ENCODE measurements at regions of chr5 and their contacts with region 1.

Region 1: DNA sequence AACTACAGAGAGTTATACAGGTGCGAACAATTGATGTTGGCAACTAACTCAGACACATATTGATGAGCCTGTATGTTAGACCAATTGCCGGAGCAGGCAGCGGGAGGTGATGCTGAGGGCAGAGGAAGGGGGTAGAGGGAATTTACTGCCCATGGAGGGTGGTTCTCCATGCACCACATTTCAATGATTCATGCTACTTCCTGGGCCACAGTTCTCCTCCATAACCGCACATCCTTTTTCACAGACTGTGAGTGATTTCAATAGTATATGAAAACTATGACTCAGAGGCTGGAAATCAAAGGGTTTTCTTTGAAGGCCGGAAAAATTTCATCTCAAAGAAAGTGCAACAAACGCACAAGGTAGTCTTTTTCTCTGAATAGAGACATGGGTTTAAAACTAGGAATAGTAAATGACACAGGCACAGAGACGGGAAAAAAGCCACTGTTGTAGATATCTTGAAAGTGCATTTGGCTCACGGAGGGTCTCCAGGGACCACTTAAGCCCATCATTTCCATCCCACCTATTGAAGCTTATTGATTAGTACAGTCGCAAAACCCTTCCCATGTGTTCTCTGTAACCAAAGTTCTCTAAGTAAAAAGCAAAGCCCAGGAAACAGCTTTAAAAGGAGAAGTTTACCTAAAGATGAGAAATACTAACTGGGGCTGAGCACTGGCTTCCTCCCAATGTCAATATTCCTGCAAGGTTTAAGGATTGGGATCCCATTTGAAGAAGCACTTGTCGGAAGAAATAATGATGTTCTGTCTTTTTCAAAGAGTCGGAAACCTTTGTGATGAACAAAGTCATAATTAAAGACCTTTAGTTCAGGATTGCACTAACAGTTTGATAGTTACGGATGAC is 28.0 kb upstream of the ADAM19 start:
- DNase-seq: peak; percentile 92
- H3K4me3 Mint-ChIP-seq: peak overlapping the region; percentile 65
- H3K27ac Mint-ChIP-seq: peak overlapping the region; percentile 88
- H3K4me1 Mint-ChIP-seq: peaks cover 73% of the 10 kb centered on the region
- H3K27me3 Mint-ChIP-seq: no peaks in the 10 kb centered on the region

Region 2: DNA sequence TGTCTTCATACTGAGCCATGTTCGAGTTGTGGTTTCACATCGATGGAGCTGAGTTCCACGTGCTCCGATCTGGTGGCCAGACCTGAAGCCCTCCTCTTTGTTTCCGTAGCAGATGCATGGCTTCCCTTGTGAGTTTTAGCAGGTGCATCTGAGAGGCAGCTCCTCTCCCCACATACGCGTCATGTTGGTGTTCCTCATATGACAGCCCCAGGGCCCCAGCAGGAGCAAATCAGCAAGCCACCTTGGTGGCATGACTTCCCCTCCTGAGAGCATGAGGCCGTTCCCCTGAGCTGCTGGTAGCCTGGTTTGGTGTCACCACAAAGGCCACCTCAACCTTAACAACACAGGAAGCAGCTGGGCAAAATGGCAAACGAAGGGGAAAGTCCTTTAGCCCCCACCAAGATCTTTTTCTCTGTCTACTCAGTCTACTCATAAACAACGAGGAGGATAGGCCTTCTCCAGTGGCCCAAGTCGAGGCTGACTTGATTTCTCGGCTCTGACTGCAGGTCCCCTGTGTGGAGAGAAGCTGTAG is 331.8 kb before region 1 on chr5:
- intact Hi-C with region 1: loop called (anchors 5 kb)
- DNase-seq: peak; percentile 95
- H3K4me3 Mint-ChIP-seq: peak overlapping the region; percentile 96
- H3K27ac Mint-ChIP-seq: peak overlapping the region; percentile 99
- H3K4me1 Mint-ChIP-seq: peaks cover 81% of the 10 kb centered on the region
- H3K27me3 Mint-ChIP-seq: no peaks in the 10 kb centered on the region

Region 3: DNA sequence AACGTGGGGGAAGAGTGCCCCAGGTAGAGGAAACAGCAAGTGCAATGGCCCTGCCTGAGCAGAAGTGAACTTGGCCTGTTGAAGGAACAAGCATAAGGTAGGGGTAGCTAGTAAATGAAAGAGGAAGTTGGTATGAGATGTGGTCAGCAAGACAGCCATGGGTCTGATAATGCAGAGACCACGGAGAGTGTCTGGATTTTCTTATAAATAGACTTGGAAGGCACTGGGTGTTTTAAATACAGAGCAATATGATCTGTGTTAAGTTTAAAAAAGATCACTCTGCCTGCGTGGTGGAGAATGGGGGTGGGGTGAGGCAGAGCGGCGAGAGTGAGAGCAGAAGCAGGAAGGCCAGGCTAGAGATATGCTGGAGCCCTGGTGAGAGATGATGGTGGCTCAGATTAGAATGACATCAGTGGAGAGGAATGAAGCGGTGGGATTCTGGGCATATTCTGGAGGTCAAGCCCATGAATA is 32.2 kb before region 1 on chr5:
- intact Hi-C with region 1: loop called (anchors 1 kb)
- DNase-seq: peak; percentile 83
- H3K4me3 Mint-ChIP-seq: peak overlapping the region; percentile 91
- H3K27ac Mint-ChIP-seq: peak overlapping the region; percentile 94
- H3K4me1 Mint-ChIP-seq: peaks cover 62% of the 10 kb centered on the region
- H3K27me3 Mint-ChIP-seq: no peaks in the 10 kb centered on the region

Region 4: GRCh38 chr5:157670662-157671591 is 67.4 kb after region 1 on chr5 and contains the start of gene C5orf52:
- intact Hi-C with region 1: loop called (anchors 2 kb)
- DNase-seq: peak; percentile 79
- H3K4me3 Mint-ChIP-seq: peak within 1 kb of the TSS; percentile 96
- H3K27ac Mint-ChIP-seq: peak within 1 kb of the TSS; percentile 91
- H3K4me1 Mint-ChIP-seq: peaks cover 34% of the 10 kb centered on the region
- H3K27me3 Mint-ChIP-seq: peaks cover 17% of the 10 kb centered on the region
- total RNA-seq, gene C5orf52: 0.42 TPM in 1 of 2 replicates, not detected in the other